SK-N-SH (cell line): ENCODE measurements at regions of chr1 and their contacts with region 1.

Region 1: GRCh38 chr1:244783138-244783537 is 52.3 kb upstream of the COX20 start:
- DNase-seq: no peak
- H3K4me3 ChIP-seq: no peak overlapping the region
- H3K27ac ChIP-seq: no peak overlapping the region
- H3K4me1 ChIP-seq: no peaks in the 10 kb centered on the region
- H3K27me3 ChIP-seq: no peaks in the 10 kb centered on the region
- CTCF ChIP-seq: no peak
- EP300 ChIP-seq: no peak
- RAD21 ChIP-seq: no peak

Region 2: GRCh38 chr1:244796718-244797406 is 13.7 kb after region 1 on chr1:
- CTCF ChIA-PET with region 1: interaction called, 17 read pairs
- POLR2A ChIA-PET with region 1: no interaction called
- DNase-seq: peak; percentile 69
- H3K4me3 ChIP-seq: no peak overlapping the region; a peak in 1 of 4 replicates
- H3K27ac ChIP-seq: no peak overlapping the region
- H3K4me1 ChIP-seq: no peaks in the 10 kb centered on the region
- H3K27me3 ChIP-seq: no peaks in the 10 kb centered on the region
- CTCF ChIP-seq: peak; percentile 88
- EP300 ChIP-seq: no peak
- RAD21 ChIP-seq: peak; percentile 92

Region 3: DNA sequence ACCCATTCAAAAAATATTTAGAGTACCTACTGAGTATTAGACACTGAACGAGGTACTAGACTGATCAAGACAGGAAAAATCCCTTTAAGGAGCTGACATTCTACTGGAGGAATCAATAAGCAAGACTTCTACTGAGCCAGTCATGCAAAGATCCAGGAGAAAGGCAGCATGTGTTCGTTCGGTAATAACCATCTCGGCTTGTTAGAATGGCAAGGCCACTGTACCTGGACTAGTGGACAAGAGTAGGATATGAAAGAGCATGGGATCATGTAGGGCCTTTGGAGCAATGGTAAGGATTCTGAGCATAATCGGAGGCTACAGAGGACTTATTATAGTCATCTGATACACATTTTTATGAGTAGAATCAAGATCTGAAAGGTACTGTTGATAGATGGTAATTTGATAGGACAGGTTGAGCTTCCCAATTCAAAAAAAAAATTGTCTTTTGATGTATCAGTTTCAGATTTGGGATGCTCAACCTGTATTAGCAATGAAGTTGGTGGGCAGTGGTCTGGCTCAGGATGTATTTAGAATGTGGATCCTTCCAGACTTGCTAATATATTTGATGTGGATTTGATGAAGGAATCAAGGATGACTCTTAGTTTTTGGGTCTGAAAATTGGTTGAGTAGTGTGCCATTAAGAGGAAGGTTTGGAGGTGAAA is 54.6 kb after region 1 on chr1:
- CTCF ChIA-PET with region 1: no interaction called
- POLR2A ChIA-PET with region 1: no interaction called
- DNase-seq: no peak
- H3K4me3 ChIP-seq: no peak overlapping the region
- H3K27ac ChIP-seq: peak overlapping the region; percentile 97 to 99; a peak in 3 of 4 replicates
- H3K4me1 ChIP-seq: peaks cover 13 to 15% of the 10 kb centered on the region in 2 experiments; a peak in 3 of 4 replicates
- H3K27me3 ChIP-seq: no peaks in the 10 kb centered on the region
- CTCF ChIP-seq: no peak
- EP300 ChIP-seq: no peak
- RAD21 ChIP-seq: no peak

Region 4: DNA sequence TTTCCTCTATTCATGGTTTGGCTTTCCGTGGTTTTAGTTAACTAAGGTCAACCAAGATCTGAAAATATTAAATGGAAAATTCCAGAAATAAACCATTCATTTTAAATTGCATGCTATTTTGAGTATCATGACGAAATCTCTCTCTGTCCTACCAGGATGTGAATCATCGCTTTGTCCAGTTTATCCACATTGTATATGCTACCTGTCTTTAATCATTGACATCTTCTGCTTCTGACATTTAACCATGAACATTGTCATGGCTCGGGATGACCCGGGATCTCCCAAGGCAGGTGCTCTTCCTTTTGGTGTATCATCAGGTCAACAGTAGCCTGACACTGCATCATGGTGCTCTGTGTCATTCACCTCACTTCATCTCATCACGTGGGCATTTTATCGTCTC is 206.7 kb after region 1 on chr1:
- CTCF ChIA-PET with region 1: no interaction called
- POLR2A ChIA-PET with region 1: no interaction called
- DNase-seq: no peak
- H3K4me3 ChIP-seq: no peak overlapping the region
- H3K27ac ChIP-seq: peak overlapping the region in 1 of 2 experiments; percentile 61; a peak in 2 of 4 replicates
- H3K4me1 ChIP-seq: no peaks in the 10 kb centered on the region
- H3K27me3 ChIP-seq: no peaks in the 10 kb centered on the region
- CTCF ChIP-seq: no peak
- EP300 ChIP-seq: no peak
- RAD21 ChIP-seq: no peak